ENCODE measurements at regions of chr6 and their contacts with region 1.

Region 1: DNA sequence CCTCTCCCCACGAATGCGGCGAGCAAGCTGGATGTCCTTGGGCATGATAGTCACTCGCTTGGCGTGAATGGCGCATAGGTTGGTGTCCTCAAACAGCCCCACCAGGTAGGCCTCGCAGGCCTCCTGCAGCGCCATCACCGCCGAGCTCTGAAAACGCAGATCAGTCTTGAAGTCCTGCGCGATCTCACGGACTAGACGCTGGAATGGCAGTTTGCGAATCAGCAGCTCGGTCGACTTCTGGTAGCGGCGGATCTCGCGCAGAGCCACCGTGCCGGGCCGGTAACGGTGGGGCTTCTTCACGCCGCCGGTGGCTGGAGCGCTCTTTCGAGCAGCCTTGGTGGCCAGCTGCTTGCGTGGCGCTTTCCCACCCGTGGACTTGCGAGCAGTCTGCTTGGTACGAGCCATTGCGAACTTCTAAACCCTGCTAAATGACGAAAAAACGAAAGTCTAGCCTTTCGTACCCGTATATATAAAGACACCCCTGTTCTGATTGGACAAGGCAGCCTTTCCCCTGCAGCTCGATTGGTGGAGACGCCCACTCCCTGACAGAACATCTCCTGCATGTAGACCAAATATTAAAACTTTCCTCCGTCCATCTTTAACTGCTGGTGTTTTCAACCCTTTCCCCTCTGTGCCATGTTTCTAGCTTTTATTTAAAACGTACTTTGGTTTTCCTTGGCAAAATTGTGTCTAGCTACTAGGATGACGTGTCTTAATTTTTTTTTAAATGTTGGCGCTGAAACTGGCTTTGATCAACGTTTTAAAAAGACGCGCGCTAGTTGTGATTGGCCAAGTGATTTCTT is 109.8 kb downstream of the HFE start:
- DNase-seq: peak; percentile 86
- ATAC-seq: peak; percentile 48
- H3K4me3 Mint-ChIP-seq: peak overlapping the region; percentile 96
- H3K27ac Mint-ChIP-seq: peak overlapping the region; percentile 96
- H3K4me1 Mint-ChIP-seq: peaks cover 24% of the 10 kb centered on the region
- H3K27me3 Mint-ChIP-seq: no peaks in the 10 kb centered on the region
- CTCF ChIP-seq: no peak

Region 2: DNA sequence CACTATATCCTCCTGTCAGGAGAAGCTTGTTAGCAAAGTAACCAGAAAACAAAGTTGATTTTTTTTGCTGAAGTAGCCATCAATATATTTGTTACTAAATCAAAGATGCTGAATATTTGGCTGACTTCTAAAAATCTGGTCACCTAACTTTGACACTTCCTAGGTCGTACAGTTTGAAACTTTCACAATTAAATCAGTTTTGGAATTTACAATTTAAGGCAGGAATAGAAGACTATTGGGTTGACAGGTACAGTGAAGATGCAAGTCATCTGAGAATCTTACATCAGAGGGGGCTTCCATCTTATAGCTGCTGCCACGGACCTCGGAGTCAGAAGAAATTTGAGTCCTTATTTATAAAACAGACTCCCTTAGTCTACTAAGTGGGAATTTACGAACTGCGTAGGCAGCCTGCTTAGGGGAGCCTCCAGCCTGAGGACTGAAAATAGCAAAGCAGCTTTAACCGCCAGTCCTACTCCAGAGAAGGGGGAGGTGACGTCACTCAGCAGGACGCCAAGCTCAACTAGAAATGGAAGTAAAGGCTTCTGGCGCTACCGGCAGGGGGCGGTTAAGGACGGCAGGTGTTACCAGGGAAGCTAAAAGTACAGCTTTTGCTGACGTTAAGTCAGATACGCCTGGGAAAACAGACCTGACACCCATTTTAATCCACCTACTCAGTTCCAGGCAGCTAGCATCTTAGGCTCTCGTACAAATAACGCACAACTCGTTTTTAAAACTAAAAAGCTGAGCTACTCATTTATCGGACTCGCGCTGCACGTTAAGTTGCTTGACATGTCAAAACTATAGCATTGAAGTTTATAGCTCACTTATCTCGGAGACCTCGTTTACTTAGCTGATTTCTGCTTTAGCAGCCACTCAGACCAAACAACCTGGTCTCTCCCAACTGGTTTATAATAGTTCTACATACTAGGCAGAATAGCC is 170.9 kb before region 1 on chr6:
- CTCF ChIA-PET with region 1: no interaction called
- POLR2A ChIA-PET with region 1: interaction called, 99 read pairs
- intact Hi-C with region 1: loop called (anchors 5 kb)
- DNase-seq: peak; percentile 97
- ATAC-seq: peak; percentile 41
- H3K4me3 Mint-ChIP-seq: peak overlapping the region; percentile 77
- H3K27ac Mint-ChIP-seq: peak overlapping the region; percentile 95
- H3K4me1 Mint-ChIP-seq: peaks cover 51% of the 10 kb centered on the region
- H3K27me3 Mint-ChIP-seq: peaks cover 2% of the 10 kb centered on the region
- CTCF ChIP-seq: peak; percentile 75

Region 3: DNA sequence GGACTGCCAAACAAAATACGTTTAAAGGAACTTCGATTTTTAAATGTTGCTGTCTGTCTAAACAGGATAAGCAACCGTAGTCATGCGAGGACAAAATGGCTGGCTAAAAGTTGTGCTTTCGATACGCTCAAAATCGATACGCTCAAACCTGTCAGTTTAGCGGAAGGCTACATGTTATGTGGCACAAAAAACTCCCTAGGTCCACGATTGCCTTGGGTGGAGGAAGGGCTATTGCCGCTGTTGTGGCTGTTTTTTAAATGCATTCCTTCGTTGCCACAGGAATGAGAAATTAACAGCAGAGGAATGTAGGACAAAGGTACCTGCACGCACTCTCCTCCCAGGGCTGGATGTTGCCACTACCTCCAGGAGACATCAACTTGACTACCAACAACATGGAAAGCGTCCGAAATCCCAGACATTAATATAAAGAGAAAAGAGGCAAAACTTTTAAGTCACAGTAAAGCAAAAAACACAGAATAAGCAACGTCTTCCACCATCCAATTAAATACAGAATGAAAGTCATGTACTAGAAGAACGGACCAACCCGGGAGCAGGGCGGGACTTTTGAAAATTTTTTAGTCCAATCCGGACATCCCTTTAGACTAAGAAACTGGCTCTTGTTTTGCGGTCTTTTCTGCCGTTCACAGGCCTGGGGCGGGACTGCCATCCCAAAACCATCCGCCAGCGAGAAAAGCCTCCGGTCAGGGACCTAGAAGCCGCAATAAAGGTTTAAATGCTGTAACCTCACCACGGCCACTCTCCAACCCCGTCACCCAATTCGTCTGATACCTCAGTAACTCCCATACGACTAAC is 142.0 kb before region 1 on chr6:
- CTCF ChIA-PET with region 1: no interaction called
- POLR2A ChIA-PET with region 1: interaction called, 12 read pairs
- intact Hi-C with region 1: no loop called
- DNase-seq: peak; percentile 94
- ATAC-seq: peak; percentile 73
- H3K4me3 Mint-ChIP-seq: peak overlapping the region; percentile 92
- H3K27ac Mint-ChIP-seq: peak overlapping the region; percentile 99
- H3K4me1 Mint-ChIP-seq: peaks cover 17% of the 10 kb centered on the region
- H3K27me3 Mint-ChIP-seq: peaks cover 3% of the 10 kb centered on the region
- CTCF ChIP-seq: no peak

Region 4: GRCh38 chr6:26175428-26176181 is 21.4 kb before region 1 on chr6:
- CTCF ChIA-PET with region 1: interaction called, 10 read pairs
- POLR2A ChIA-PET with region 1: interaction called, 182 read pairs
- intact Hi-C with region 1: no loop called
- DNase-seq: peak; percentile 72
- ATAC-seq: peak; percentile 17
- H3K4me3 Mint-ChIP-seq: peak overlapping the region; percentile 46
- H3K27ac Mint-ChIP-seq: peak overlapping the region; percentile 63
- H3K4me1 Mint-ChIP-seq: peaks cover 38% of the 10 kb centered on the region
- H3K27me3 Mint-ChIP-seq: no peaks in the 10 kb centered on the region
- CTCF ChIP-seq: peak; percentile 86

Region 5: DNA sequence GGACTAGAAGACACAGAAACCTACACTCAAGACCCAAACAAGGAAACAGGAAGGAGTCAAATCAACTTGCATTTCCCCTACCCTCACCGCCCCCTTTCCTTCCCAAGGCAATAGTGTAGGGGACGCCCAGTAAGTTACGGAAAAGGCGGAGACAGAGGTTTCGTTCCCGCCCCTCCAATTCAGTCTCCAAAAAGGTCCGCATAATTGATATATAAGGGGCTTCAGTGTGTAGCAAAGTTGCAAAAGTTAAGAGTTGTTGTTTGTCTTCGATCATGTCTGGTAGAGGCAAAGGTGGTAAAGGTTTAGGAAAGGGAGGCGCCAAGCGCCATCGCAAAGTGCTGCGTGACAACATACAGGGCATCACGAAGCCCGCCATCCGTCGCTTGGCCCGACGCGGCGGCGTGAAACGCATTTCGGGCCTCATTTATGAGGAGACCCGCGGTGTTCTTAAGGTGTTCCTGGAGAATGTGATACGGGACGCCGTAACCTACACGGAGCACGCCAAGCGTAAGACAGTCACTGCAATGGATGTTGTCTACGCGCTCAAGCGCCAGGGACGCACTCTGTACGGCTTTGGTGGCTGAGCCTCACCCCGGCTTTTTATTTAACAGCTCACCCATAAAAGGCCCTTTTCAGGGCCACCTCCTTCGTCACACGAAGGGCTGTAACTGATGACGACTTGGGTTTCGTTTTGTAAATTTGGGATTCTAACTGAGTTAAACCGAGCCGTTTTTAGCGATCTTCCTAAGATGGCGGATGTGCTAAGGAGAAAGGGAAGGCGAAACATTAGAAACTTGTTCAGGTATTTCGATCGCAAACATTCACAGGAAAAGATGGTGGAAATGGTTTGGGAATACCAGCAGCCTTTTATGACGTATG is 43.3 kb after region 1 on chr6:
- CTCF ChIA-PET with region 1: no interaction called
- POLR2A ChIA-PET with region 1: interaction called, 351 read pairs
- intact Hi-C with region 1: no loop called
- DNase-seq: peak; percentile 88
- ATAC-seq: peak; percentile 82
- H3K4me3 Mint-ChIP-seq: peak overlapping the region; percentile 77
- H3K27ac Mint-ChIP-seq: peak overlapping the region; percentile 92
- H3K4me1 Mint-ChIP-seq: peaks cover 32% of the 10 kb centered on the region
- H3K27me3 Mint-ChIP-seq: no peaks in the 10 kb centered on the region
- CTCF ChIP-seq: no peak

Region 6: GRCh38 chr6:26315274-26315673 is 118.2 kb after region 1 on chr6:
- CTCF ChIA-PET with region 1: no interaction called
- POLR2A ChIA-PET with region 1: no interaction called
- intact Hi-C with region 1: no loop called
- DNase-seq: no peak
- ATAC-seq: no peak
- H3K4me3 Mint-ChIP-seq: no peak overlapping the region
- H3K27ac Mint-ChIP-seq: no peak overlapping the region
- H3K4me1 Mint-ChIP-seq: peaks cover 26% of the 10 kb centered on the region
- H3K27me3 Mint-ChIP-seq: peaks cover 8% of the 10 kb centered on the region
- CTCF ChIP-seq: no peak

Region 7: GRCh38 chr6:27809939-27810767 is 1613.1 kb after region 1 on chr6:
- CTCF ChIA-PET with region 1: no interaction called
- POLR2A ChIA-PET with region 1: interaction called, 13 read pairs
- intact Hi-C with region 1: no loop called
- DNase-seq: peak; percentile 78
- ATAC-seq: peak; percentile 38
- H3K4me3 Mint-ChIP-seq: peak overlapping the region; percentile 88
- H3K27ac Mint-ChIP-seq: peak overlapping the region; percentile 87
- H3K4me1 Mint-ChIP-seq: peaks cover 56% of the 10 kb centered on the region
- H3K27me3 Mint-ChIP-seq: no peaks in the 10 kb centered on the region
- CTCF ChIP-seq: no peak

Measured in activated CD8-positive, alpha-beta T cell treated with anti-CD3 and anti-CD28 coated beads for 36 hours (primary cell).